Esophagus muscularis mucosa (tissue), 4 donors: ENCODE measurements at regions of chr18 and their contacts with region 1.

Region 1: GRCh38 chr18:9614401-9615279 is at the start of gene PPP4R1:
- DNase-seq: peak; percentile 95
- H3K4me3 ChIP-seq: peak within 1 kb of the TSS; percentile 85 to 93 (median 88)
- H3K27ac ChIP-seq: peak within 1 kb of the TSS; percentile 97 to 99 (median 98)
- H3K4me1 ChIP-seq: peaks cover 22 to 48% (median 47%) of the 10 kb centered on the region in 4 donors
- H3K27me3 ChIP-seq: no peaks in the 10 kb centered on the region
- CTCF ChIP-seq: no peak
- EP300 ChIP-seq: no peak
- POLR2A ChIP-seq: no peak
- total RNA-seq, gene PPP4R1: 74.6 to 129 (median 97.1) TPM

Region 2: GRCh38 chr18:9673296-9674251 is 58.9 kb after region 1 on chr18:
- intact Hi-C with region 1: loop called (anchors 2 kb)
- DNase-seq: peak; percentile 88
- H3K4me3 ChIP-seq: no peak overlapping the region
- H3K27ac ChIP-seq: no peak overlapping the region
- H3K4me1 ChIP-seq: peaks cover 0 to 9% (median 8%) of the 10 kb centered on the region in 4 donors
- H3K27me3 ChIP-seq: no peaks in the 10 kb centered on the region
- CTCF ChIP-seq: peak; percentile 32 to 43 (median 43)
- EP300 ChIP-seq: no peak
- POLR2A ChIP-seq: no peak

Region 3: DNA sequence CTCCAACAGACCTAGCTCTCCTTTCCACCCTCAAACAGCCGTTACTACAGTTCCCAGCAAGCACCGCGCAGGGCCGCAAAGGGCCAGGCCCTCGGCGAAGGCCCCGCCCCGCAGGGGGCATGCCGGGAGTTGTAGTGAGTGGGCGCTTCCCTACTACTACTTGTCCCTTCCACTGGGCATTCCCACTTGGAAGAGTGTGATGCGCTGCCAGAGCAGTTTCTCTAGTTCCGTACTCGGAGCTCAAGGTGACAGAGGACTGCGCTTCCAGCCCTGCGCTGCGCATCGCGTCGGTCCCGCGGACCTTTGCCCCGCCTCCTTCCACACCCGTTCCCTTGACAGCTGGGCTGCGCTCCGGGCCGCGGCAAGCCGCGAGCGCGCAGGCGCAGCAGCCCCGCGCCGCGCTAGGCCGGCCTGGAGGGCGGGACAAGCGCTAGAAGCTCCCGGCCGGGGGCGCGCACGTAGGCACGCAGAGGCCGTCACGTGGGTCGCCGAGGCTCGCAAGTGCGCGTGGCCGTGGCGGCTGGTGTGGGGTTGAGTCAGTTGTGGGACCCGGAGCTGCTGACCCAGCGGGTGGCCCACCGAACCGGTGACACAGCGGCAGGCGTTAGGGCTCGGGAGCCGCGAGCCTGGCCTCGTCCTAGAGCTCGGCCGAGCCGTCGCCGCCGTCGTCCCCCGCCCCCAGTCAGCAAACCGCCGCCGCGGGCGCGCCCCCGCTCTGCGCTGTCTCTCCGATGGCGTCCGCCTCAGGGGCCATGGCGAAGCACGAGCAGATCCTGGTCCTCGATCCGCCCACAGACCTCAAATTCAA is 299.1 kb after region 1 on chr18 and contains the start of gene VAPA:
- intact Hi-C with region 1: loop called (anchors 10 kb)
- DNase-seq: peak; percentile 97
- H3K4me3 ChIP-seq: peak within 1 kb of the TSS; percentile 76 to 95 (median 92)
- H3K27ac ChIP-seq: peak within 1 kb of the TSS; percentile 100
- H3K4me1 ChIP-seq: peaks cover 25 to 42% (median 39%) of the 10 kb centered on the region in 4 donors
- H3K27me3 ChIP-seq: no peaks in the 10 kb centered on the region
- CTCF ChIP-seq: peak in 1 of 3 experiments; percentile 7
- EP300 ChIP-seq: no peak
- POLR2A ChIP-seq: peak; percentile 94
- total RNA-seq, gene VAPA: 198 to 336 (median 260) TPM